Mammary epithelial cell (primary cell): ENCODE measurements at regions of chr14 and their contacts with region 1.

Region 1: DNA sequence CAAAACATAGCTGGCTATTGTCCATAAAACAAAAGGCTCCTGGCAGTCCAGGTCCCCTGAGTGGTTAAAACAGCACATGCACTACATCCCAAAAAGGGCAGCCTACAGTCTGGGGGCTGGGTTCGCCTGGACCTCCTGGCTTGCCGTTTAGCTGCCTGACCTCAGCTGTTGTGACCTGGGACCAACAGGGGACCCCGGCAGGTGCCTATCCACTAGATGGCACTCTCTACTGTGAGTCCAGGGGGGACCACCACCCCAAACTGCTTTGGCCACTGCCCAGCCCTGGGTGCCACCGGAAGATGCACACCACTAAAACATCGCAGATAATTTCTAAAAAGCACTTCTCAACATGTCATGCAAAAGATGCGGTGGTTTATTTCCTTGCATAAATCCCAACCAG is 2.9 kb upstream of the RTL1 start:
- DNase-seq: no peak
- H3K4me3 ChIP-seq: no peak overlapping the region
- H3K27ac ChIP-seq: no peak overlapping the region
- H3K4me1 ChIP-seq: peaks cover 3% of the 10 kb centered on the region
- H3K27me3 ChIP-seq: peaks cover 2% of the 10 kb centered on the region
- CTCF ChIP-seq: no peak

Region 2: GRCh38 chr14:101442451-101442850 is 536.0 kb after region 1 on chr14:
- CTCF ChIA-PET with region 1: interaction called, 11 read pairs
- dilution Hi-C with region 1: no loop called
- in situ Hi-C with region 1: no loop called
- intact Hi-C with region 1: no loop called
- DNase-seq: no peak
- H3K4me3 ChIP-seq: no peak overlapping the region
- H3K27ac ChIP-seq: no peak overlapping the region
- H3K4me1 ChIP-seq: no peaks in the 10 kb centered on the region
- H3K27me3 ChIP-seq: no peaks in the 10 kb centered on the region
- CTCF ChIP-seq: no peak